Gastrocnemius medialis (tissue), 4 donors: ENCODE measurements at regions of chr4 and their contacts with region 1.

Region 1: DNA sequence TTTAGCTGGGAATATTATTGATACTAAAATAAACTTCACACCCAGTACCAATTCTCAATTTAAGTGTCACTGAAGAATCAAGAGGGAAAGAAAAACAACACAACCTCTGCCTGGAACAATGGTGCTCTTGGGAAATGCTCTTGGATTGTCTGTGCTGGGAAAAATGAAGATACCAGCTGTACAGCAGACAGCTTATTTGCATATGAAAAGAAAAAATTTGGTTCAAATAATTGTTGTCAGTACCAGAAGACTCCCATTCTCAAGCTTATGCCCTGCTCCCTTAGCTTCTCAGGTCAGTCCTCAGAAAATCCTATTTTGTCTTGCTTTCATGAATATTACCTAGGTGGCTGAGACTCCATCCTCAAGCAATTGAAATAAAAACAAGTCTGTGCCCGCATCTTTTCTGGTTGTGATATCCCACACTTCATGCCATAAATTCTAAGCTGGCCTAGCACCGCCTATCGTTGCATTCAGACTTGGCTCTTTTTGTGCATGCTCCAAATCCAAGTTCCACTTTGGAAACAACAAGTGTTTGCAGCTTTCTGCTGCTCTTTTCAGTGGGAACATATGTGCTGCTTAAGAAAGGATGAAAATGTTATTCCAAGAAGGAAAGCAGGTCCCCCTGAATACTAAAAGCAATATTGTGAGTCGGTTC is 431.6 kb downstream of the INPP4B start:
- DNase-seq: no peak
- ATAC-seq: no peak
- H3K4me3 ChIP-seq: no peak overlapping the region
- H3K27ac ChIP-seq: no peak overlapping the region
- H3K4me1 ChIP-seq: peaks cover 5 to 7% of the 10 kb centered on the region in 2 donors
- H3K27me3 ChIP-seq: no peaks in the 10 kb centered on the region
- CTCF ChIP-seq: no peak
- POLR2A ChIP-seq: no peak

Region 2: GRCh38 chr4:142379277-142380057 is 35.0 kb before region 1 on chr4:
- in situ Hi-C with region 1: no loop called
- intact Hi-C with region 1: loop called (anchors 5 kb)
- DNase-seq: no peak
- ATAC-seq: no peak
- H3K4me3 ChIP-seq: no peak overlapping the region
- H3K27ac ChIP-seq: peak overlapping the region in 2 of 4 donors; percentile 14 to 32
- H3K4me1 ChIP-seq: peaks cover 8 to 31% of the 10 kb centered on the region in 2 donors
- H3K27me3 ChIP-seq: no peaks in the 10 kb centered on the region
- CTCF ChIP-seq: no peak
- POLR2A ChIP-seq: no peak

Region 3: DNA sequence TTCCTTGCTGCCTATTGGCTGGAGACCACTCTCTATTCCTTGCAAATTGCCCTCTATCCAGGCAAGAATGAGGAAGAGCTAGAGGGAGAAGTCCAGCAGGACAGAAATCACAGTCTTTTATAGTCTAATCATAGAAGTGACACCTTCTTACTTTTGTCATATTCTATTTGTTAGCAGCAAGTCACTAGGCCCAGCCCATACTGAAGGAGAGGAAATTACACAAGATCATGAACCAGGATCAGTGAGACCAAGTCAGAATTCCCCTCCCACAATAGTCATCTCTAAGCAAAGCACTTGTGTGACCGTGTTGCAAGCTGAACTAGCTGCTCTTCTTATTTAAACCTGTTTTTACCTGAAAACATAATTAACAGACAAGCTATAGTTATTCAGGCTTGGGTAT is 114.0 kb after region 1 on chr4:
- in situ Hi-C with region 1: no loop called
- intact Hi-C with region 1: no loop called
- DNase-seq: no peak
- ATAC-seq: no peak
- H3K4me3 ChIP-seq: no peak overlapping the region
- H3K27ac ChIP-seq: no peak overlapping the region
- H3K4me1 ChIP-seq: no peaks in the 10 kb centered on the region
- H3K27me3 ChIP-seq: no peaks in the 10 kb centered on the region
- CTCF ChIP-seq: no peak
- POLR2A ChIP-seq: no peak

Region 4: GRCh38 chr4:142595222-142595871 is 180.9 kb after region 1 on chr4:
- in situ Hi-C with region 1: no loop called
- intact Hi-C with region 1: no loop called
- DNase-seq: no peak
- ATAC-seq: no peak
- H3K4me3 ChIP-seq: no peak overlapping the region
- H3K27ac ChIP-seq: no peak overlapping the region
- H3K4me1 ChIP-seq: no peaks in the 10 kb centered on the region
- H3K27me3 ChIP-seq: no peaks in the 10 kb centered on the region
- CTCF ChIP-seq: no peak
- POLR2A ChIP-seq: no peak

Region 5: GRCh38 chr4:143133977-143134376 is 719.5 kb after region 1 on chr4:
- in situ Hi-C with region 1: no loop called
- intact Hi-C with region 1: no loop called
- DNase-seq: no peak
- ATAC-seq: no peak
- H3K4me3 ChIP-seq: no peak overlapping the region
- H3K27ac ChIP-seq: no peak overlapping the region
- H3K4me1 ChIP-seq: no peaks in the 10 kb centered on the region
- H3K27me3 ChIP-seq: no peaks in the 10 kb centered on the region
- CTCF ChIP-seq: no peak
- POLR2A ChIP-seq: no peak